CD8-positive, alpha-beta T cell (primary cell): ENCODE measurements at regions of chr2 and their contacts with region 1.

Region 1: GRCh38 chr2:27086090-27086723 is 365 bp upstream of the KHK start:
- DNase-seq: peak; percentile 94 to 100 (median 98)
- ATAC-seq: peak; percentile 89
- H3K4me3 ChIP-seq: peak overlapping the region; percentile 68 to 80
- H3K4me3 Mint-ChIP-seq: peak overlapping the region; percentile 83
- H3K27ac ChIP-seq: peak overlapping the region; percentile 78 to 82
- H3K27ac Mint-ChIP-seq: peak overlapping the region; percentile 80
- H3K4me1 ChIP-seq: peaks cover 28% of the 10 kb centered on the region
- H3K4me1 Mint-ChIP-seq: peaks cover 21% of the 10 kb centered on the region
- H3K27me3 ChIP-seq: no peaks in the 10 kb centered on the region
- H3K27me3 Mint-ChIP-seq: no peaks in the 10 kb centered on the region
- CTCF ChIP-seq: peak; percentile 81

Region 2: GRCh38 chr2:26964446-26965130 is 121.6 kb before region 1 on chr2:
- CTCF ChIA-PET with region 1: interaction called, 6 read pairs
- POLR2A ChIA-PET with region 1: no interaction called
- intact Hi-C with region 1: loop called (anchors 1 to 5 kb)
- DNase-seq: no peak
- ATAC-seq: no peak
- H3K4me3 ChIP-seq: no peak overlapping the region
- H3K4me3 Mint-ChIP-seq: no peak overlapping the region
- H3K27ac ChIP-seq: no peak overlapping the region
- H3K27ac Mint-ChIP-seq: no peak overlapping the region
- H3K4me1 ChIP-seq: no peaks in the 10 kb centered on the region
- H3K4me1 Mint-ChIP-seq: peaks cover 10% of the 10 kb centered on the region
- H3K27me3 ChIP-seq: no peaks in the 10 kb centered on the region
- H3K27me3 Mint-ChIP-seq: peaks cover 40% of the 10 kb centered on the region
- CTCF ChIP-seq: no peak

Region 3: GRCh38 chr2:27050281-27050995 is 35.8 kb before region 1 on chr2:
- CTCF ChIA-PET with region 1: interaction called, 7 read pairs
- POLR2A ChIA-PET with region 1: interaction called, 32 read pairs
- intact Hi-C with region 1: loop called (anchors 1 kb)
- DNase-seq: peak; percentile 85 to 97 (median 93)
- ATAC-seq: peak; percentile 64
- H3K4me3 ChIP-seq: peak overlapping the region; percentile 78 to 83
- H3K4me3 Mint-ChIP-seq: peak overlapping the region; percentile 99
- H3K27ac ChIP-seq: peak overlapping the region; percentile 74 to 88
- H3K27ac Mint-ChIP-seq: peak overlapping the region; percentile 99
- H3K4me1 ChIP-seq: peaks cover 10% of the 10 kb centered on the region
- H3K4me1 Mint-ChIP-seq: peaks cover 9% of the 10 kb centered on the region
- H3K27me3 ChIP-seq: no peaks in the 10 kb centered on the region
- H3K27me3 Mint-ChIP-seq: peaks cover 2% of the 10 kb centered on the region
- CTCF ChIP-seq: peak; percentile 28

Region 4: GRCh38 chr2:27133905-27134780 is 47.9 kb after region 1 on chr2 and contains the start of gene PREB:
- CTCF ChIA-PET with region 1: interaction called, 4 read pairs
- POLR2A ChIA-PET with region 1: interaction called, 7 read pairs
- intact Hi-C with region 1: loop called (anchors 1 kb)
- DNase-seq: peak; percentile 96 to 99 (median 98)
- ATAC-seq: peak; percentile 97
- H3K4me3 ChIP-seq: peak within 1 kb of the TSS; percentile 86 to 99
- H3K4me3 Mint-ChIP-seq: peak within 1 kb of the TSS; percentile 95
- H3K27ac ChIP-seq: peak within 1 kb of the TSS; percentile 78 to 92
- H3K27ac Mint-ChIP-seq: peak within 1 kb of the TSS; percentile 97
- H3K4me1 ChIP-seq: peaks cover 14% of the 10 kb centered on the region
- H3K4me1 Mint-ChIP-seq: peaks cover 18% of the 10 kb centered on the region
- H3K27me3 ChIP-seq: no peaks in the 10 kb centered on the region
- H3K27me3 Mint-ChIP-seq: no peaks in the 10 kb centered on the region
- CTCF ChIP-seq: no peak
- total RNA-seq, gene PREB: 9.0 to 10.1 TPM

Region 5: GRCh38 chr2:27322766-27323595 is 236.8 kb after region 1 on chr2 and contains the start of gene MPV17:
- CTCF ChIA-PET with region 1: no interaction called
- POLR2A ChIA-PET with region 1: interaction called, 3 read pairs
- intact Hi-C with region 1: loop called in 1 of 2 experiments (anchors 2 kb)
- DNase-seq: peak; percentile 65 to 93 (median 87)
- ATAC-seq: peak; percentile 96
- H3K4me3 ChIP-seq: peak within 1 kb of the TSS; percentile 80 to 81
- H3K4me3 Mint-ChIP-seq: peak within 1 kb of the TSS; percentile 99
- H3K27ac ChIP-seq: peak within 1 kb of the TSS; percentile 89 to 94
- H3K27ac Mint-ChIP-seq: peak within 1 kb of the TSS; percentile 99
- H3K4me1 ChIP-seq: peaks cover 9% of the 10 kb centered on the region
- H3K4me1 Mint-ChIP-seq: peaks cover 25% of the 10 kb centered on the region
- H3K27me3 ChIP-seq: no peaks in the 10 kb centered on the region
- H3K27me3 Mint-ChIP-seq: no peaks in the 10 kb centered on the region
- CTCF ChIP-seq: no peak
- total RNA-seq, gene MPV17: 23.6 to 26.0 TPM